Psoas muscle (tissue), 8 donors: ENCODE measurements at regions of chr1 and their contacts with region 1.

Region 1: GRCh38 chr1:59290193-59290947 is 6.5 kb upstream of the FGGY start:
- DNase-seq: peak; percentile 46 to 78
- ATAC-seq: peak; percentile 69 to 89 (median 87)
- H3K4me3 ChIP-seq: no peak overlapping the region
- H3K27ac ChIP-seq: peak overlapping the region; percentile 95
- H3K4me1 ChIP-seq: peaks cover 47% of the 10 kb centered on the region
- H3K27me3 ChIP-seq: no peaks in the 10 kb centered on the region
- CTCF ChIP-seq: peak; percentile 42

Region 2: GRCh38 chr1:57860931-57861565 is 1429.3 kb before region 1 on chr1:
- intact Hi-C with region 1: no loop called
- DNase-seq: no peak
- ATAC-seq: no peak
- H3K4me3 ChIP-seq: no peak overlapping the region
- H3K27ac ChIP-seq: no peak overlapping the region
- H3K4me1 ChIP-seq: no peaks in the 10 kb centered on the region
- H3K27me3 ChIP-seq: no peaks in the 10 kb centered on the region
- CTCF ChIP-seq: no peak

Region 3: GRCh38 chr1:59143133-59143487 is 147.3 kb before region 1 on chr1:
- intact Hi-C with region 1: loop called in 1 of 2 experiments (anchors 5 kb)
- DNase-seq: no peak
- ATAC-seq: peak; percentile 16 to 38 (median 23)
- H3K4me3 ChIP-seq: no peak overlapping the region
- H3K27ac ChIP-seq: peak overlapping the region; percentile 69
- H3K4me1 ChIP-seq: peaks cover 46% of the 10 kb centered on the region
- H3K27me3 ChIP-seq: no peaks in the 10 kb centered on the region
- CTCF ChIP-seq: no peak

Region 4: DNA sequence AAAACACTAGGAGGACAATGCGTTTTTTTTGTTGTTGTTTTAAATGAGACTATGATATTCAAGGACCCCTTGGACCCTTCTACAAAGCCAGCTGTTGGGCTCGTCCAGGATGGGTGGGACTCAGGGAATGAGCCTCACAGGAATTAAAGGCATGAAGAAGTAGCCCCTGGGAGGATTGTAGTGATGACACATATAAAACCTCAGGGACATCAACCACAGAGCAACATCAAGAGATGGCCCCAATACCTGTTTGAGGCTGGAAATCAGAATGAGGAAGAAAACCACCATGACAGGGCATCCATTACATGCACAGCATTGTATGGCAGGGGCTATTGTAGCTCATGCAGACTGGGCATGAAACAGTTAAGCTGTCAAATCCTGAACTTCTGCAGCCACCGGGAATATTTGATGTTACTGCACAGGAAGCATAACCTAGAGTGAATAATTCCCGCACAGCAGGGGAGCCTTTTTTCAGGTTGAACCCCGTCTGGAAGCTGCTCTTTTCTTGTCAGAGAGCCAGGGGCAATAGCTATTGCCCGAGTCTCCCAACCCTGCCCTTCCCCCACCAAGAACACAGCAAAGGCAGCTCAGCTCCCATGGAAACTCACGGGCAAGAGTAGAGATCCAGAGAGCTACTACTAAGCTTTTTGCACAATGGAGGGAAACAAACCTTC is 133.7 kb before region 1 on chr1:
- intact Hi-C with region 1: loop called in 1 of 2 experiments (anchors 5 kb)
- DNase-seq: no peak
- ATAC-seq: no peak
- H3K4me3 ChIP-seq: no peak overlapping the region
- H3K27ac ChIP-seq: peak overlapping the region; percentile 47
- H3K4me1 ChIP-seq: peaks cover 27% of the 10 kb centered on the region
- H3K27me3 ChIP-seq: no peaks in the 10 kb centered on the region
- CTCF ChIP-seq: no peak

Region 5: DNA sequence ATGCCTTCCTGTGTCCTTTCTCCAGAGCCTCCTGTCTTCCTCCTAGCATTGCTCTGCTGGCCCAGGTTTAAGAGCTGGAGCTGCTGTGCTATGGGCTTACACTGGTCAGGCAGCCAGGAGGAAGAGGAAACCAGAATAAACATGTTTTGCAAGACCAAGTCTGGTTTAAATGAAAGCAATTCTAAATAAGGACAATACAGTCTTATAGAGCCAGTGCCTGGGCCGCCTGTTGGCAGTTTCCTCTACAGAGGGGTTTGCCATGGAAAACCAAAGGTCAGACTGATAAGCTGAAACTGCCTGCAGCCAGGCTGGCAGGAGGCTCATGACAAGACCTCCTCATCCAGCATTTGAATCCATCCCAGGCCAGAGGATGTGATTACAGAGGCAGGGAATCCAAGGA is 86.4 kb before region 1 on chr1:
- intact Hi-C with region 1: loop called in 1 of 2 experiments (anchors 5 kb)
- DNase-seq: no peak
- ATAC-seq: peak in 3 of 4 donors; percentile 24 to 60 (median 59)
- H3K4me3 ChIP-seq: no peak overlapping the region
- H3K27ac ChIP-seq: peak overlapping the region; percentile 62
- H3K4me1 ChIP-seq: peaks cover 12% of the 10 kb centered on the region
- H3K27me3 ChIP-seq: no peaks in the 10 kb centered on the region
- CTCF ChIP-seq: no peak

Region 6: GRCh38 chr1:59309795-59310548 is 19.6 kb after region 1 on chr1:
- intact Hi-C with region 1: no loop called
- DNase-seq: no peak
- ATAC-seq: peak in 3 of 4 donors; percentile 68 to 74 (median 71)
- H3K4me3 ChIP-seq: peak overlapping the region; percentile 64
- H3K27ac ChIP-seq: peak overlapping the region; percentile 74
- H3K4me1 ChIP-seq: peaks cover 26% of the 10 kb centered on the region
- H3K27me3 ChIP-seq: no peaks in the 10 kb centered on the region
- CTCF ChIP-seq: no peak

Region 7: DNA sequence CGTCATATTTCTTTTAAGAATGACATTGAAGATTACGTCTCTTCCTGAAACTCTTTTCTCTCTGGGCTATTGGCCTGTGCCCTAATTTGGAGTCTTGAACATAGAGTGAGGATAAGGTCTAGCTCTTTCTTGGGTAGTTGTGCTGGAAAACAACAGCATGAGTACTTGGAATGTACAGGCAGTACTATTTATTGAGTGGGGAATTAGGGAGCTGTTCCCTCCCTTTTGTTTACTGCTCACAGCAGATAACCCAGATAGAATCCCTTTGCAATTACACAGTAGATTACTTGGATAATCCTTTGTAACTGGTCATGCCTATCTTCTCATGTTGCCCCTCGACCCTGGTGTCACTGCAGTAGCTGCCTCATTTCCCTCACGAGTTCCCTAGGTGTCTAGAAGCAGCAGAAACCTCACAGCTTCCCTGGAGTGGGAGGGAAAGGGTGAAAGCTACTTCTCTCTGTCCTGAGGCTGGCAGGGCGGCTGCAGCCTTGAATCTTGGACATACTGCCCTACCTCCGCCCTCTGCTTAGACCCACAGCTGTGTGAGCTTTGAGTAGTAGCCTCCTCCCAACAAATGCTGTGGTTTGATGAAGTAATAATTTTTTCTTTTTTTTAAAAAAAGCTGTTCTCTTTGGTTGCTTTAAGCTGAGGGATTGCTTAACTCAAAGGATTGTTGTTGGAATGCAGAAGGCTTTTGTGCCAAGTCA is 77.1 kb after region 1 on chr1:
- intact Hi-C with region 1: no loop called
- DNase-seq: peak; percentile 65 to 81
- ATAC-seq: peak; percentile 80 to 92 (median 88)
- H3K4me3 ChIP-seq: no peak overlapping the region
- H3K27ac ChIP-seq: peak overlapping the region; percentile 69
- H3K4me1 ChIP-seq: peaks cover 19% of the 10 kb centered on the region
- H3K27me3 ChIP-seq: no peaks in the 10 kb centered on the region
- CTCF ChIP-seq: no peak